Prostate gland (tissue), 2 donors: ENCODE measurements at regions of chr11 and their contacts with region 1.

Region 1: GRCh38 chr11:62394825-62395538 is 23.9 kb upstream of the SCGB1A1 start:
- DNase-seq: peak; percentile 82
- H3K4me3 ChIP-seq: peak overlapping the region; percentile 7 to 12
- H3K27ac ChIP-seq: peak overlapping the region; percentile 62 to 69
- H3K4me1 ChIP-seq: peaks cover 10% of the 10 kb centered on the region
- H3K27me3 ChIP-seq: no peaks in the 10 kb centered on the region
- CTCF ChIP-seq: peak; percentile 41 to 82 (median 80)
- POLR2A ChIP-seq: no peak

Region 2: DNA sequence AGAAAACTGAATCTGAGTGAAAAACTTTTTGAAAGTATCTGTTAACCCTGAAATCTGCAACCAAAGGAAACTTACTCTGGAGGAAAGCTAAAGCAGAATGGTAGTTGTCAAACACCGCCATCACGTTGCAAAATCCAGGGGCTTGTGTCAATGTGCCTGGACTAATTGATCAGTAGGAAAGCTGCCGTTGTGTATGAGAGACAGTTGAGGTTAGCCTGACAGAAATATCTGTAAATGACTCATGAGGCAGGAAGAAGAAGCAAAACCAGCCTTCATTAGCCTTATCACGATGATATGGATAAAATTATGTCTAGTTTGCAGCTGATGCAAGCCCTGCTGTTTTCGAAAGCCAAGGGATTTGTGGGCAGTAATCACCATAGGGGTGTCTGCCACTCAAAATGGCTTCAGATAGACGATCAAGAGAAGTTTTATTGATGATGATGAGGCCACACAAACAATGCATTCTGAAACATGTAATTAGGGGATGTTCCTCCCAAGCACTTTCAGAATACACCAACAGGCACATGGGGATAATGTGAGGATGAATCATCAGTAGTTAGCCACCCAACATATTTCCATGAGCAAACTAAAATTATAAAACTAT is 32.8 kb after region 1 on chr11:
- intact Hi-C with region 1: loop called (anchors 5 kb)
- DNase-seq: no peak
- H3K4me3 ChIP-seq: no peak overlapping the region
- H3K27ac ChIP-seq: no peak overlapping the region
- H3K4me1 ChIP-seq: no peaks in the 10 kb centered on the region
- H3K27me3 ChIP-seq: no peaks in the 10 kb centered on the region
- CTCF ChIP-seq: no peak
- POLR2A ChIP-seq: no peak

Region 3: DNA sequence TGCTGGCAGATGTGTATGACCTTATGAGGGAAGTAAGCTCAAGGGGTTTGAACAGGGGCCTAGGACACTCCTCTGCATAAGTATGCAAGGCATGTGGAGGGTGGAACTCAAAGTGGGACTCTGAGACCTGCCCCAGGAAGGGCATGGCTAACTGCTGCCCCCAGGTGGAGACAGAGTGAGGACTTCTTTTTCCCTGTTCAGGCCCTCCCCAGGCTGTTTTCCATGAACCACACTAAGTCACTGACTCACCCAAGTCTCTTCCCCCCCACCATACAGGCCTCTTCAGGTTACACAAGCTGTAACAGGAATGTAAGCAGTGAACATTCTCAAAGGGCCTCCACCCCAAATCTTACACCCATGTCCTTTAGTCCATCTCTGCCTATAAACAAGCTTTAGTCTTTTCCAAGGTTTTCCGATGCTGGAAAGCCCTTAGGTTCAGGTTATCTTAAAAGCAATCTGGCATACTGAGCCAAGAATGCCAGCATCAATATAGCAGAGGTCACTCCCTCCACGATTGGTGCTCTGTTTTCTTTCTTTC is 165.7 kb after region 1 on chr11:
- intact Hi-C with region 1: loop called (anchors 2 kb)
- DNase-seq: peak; percentile 95
- H3K4me3 ChIP-seq: no peak overlapping the region
- H3K27ac ChIP-seq: peak overlapping the region; percentile 71 to 79
- H3K4me1 ChIP-seq: peaks cover 16% of the 10 kb centered on the region
- H3K27me3 ChIP-seq: no peaks in the 10 kb centered on the region
- CTCF ChIP-seq: peak; percentile 73 to 95 (median 91)
- POLR2A ChIP-seq: no peak

Region 4: GRCh38 chr11:62860835-62861563 is 466.0 kb after region 1 on chr11:
- intact Hi-C with region 1: loop called (anchors 10 kb)
- DNase-seq: no peak
- H3K4me3 ChIP-seq: no peak overlapping the region
- H3K27ac ChIP-seq: peak overlapping the region; percentile 59 to 75
- H3K4me1 ChIP-seq: peaks cover 16% of the 10 kb centered on the region
- H3K27me3 ChIP-seq: no peaks in the 10 kb centered on the region
- CTCF ChIP-seq: no peak
- POLR2A ChIP-seq: no peak